CD4-positive, alpha-beta T cell (primary cell): ENCODE measurements at regions of chr22 and their contacts with region 1.

Region 1: DNA sequence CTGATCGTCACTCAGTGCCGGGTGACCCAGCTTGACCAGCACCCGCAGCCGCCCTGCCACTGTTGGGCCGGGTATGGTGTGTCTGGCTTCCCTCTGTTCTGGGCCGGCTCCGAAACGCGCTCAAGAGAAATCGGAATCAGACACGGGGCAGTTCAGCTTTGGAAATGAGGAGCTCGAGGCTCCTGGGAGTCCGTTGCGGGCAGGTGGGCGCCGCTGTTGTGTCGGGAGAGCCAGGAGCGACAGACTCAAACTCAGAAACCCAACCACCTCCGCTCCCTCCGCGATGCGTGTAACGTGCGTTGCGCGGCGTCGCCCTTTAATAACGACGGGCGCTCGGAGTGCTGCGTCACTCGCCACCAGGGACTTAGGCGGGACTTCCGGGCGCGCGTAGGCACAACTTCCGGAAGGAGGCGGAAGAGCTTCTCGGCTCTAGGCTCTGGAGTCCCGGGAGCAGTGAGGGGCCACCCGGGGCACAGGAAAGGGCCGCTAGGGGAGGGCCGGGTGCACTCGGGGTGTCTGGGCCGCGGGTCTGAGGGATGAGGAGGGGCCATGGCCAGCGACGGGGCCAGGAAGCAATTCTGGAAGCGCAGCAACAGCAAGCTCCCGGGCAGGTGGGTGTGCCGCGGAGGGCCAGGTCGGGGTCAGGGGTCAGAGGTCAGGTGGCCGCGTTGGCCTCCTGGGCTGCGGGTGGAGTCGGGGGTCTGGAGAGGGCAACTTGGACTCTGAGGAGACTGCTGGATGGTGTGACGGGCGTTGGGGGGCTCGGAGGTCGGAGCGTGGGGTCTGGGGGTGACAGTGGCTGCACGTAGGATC is at the start of gene TBC1D22A:
- DNase-seq: peak; percentile 91 to 97 (median 93)
- ATAC-seq: peak; percentile 86
- H3K4me3 ChIP-seq: peak within 1 kb of the TSS; percentile 77
- H3K4me3 Mint-ChIP-seq: peak within 1 kb of the TSS; percentile 99
- H3K27ac ChIP-seq: peak within 1 kb of the TSS; percentile 92
- H3K27ac Mint-ChIP-seq: peak within 1 kb of the TSS; percentile 100
- H3K4me1 ChIP-seq: peaks cover 57% of the 10 kb centered on the region
- H3K4me1 Mint-ChIP-seq: peaks cover 64% of the 10 kb centered on the region
- H3K27me3 ChIP-seq: no peaks in the 10 kb centered on the region
- H3K27me3 Mint-ChIP-seq: no peaks in the 10 kb centered on the region
- CTCF ChIP-seq: no peak
- total RNA-seq, gene TBC1D22A: 27.1 to 31.7 TPM

Region 2: DNA sequence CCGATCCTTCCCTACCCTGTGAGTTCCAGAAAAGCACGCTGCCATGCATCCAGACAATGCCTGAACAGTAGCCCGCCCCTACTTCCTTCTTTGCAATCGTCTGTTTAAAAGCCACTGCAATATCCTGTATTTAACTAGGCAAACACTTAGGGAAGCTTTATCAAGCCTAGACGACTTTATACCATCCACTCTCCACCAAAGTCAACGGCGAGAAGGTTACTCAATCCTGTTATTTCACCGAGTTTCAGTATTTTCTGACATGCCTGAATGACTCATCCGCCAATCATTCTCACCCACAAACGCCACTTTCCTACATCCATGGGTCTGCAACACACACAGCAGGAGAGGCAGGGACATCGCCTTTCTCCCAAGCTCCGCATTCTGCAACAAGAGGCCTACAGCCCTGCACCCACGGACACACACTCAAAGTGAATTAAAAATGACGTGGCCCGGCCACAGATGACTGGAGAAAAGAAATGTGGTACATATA is 234.3 kb before region 1 on chr22:
- CTCF ChIA-PET with region 1: no interaction called
- POLR2A ChIA-PET with region 1: no interaction called
- intact Hi-C with region 1: no loop called
- DNase-seq: peak in 2 of 14 experiments; percentile 51 to 62
- ATAC-seq: no peak
- H3K4me3 ChIP-seq: no peak overlapping the region
- H3K4me3 Mint-ChIP-seq: no peak overlapping the region
- H3K27ac ChIP-seq: no peak overlapping the region
- H3K27ac Mint-ChIP-seq: no peak overlapping the region
- H3K4me1 ChIP-seq: no peaks in the 10 kb centered on the region
- H3K4me1 Mint-ChIP-seq: no peaks in the 10 kb centered on the region
- H3K27me3 ChIP-seq: peaks cover 0 to 2% of the 10 kb centered on the region in 2 experiments
- H3K27me3 Mint-ChIP-seq: peaks cover 8% of the 10 kb centered on the region
- CTCF ChIP-seq: no peak

Region 3: GRCh38 chr22:46563381-46564083 is 198.9 kb before region 1 on chr22:
- CTCF ChIA-PET with region 1: interaction called, 10 read pairs
- POLR2A ChIA-PET with region 1: no interaction called
- intact Hi-C with region 1: no loop called
- DNase-seq: peak; percentile 66 to 88 (median 74)
- ATAC-seq: peak; percentile 96
- H3K4me3 ChIP-seq: peak overlapping the region; percentile 30
- H3K4me3 Mint-ChIP-seq: peak overlapping the region; percentile 38
- H3K27ac ChIP-seq: no peak overlapping the region
- H3K27ac Mint-ChIP-seq: no peak overlapping the region
- H3K4me1 ChIP-seq: peaks cover 13% of the 10 kb centered on the region
- H3K4me1 Mint-ChIP-seq: peaks cover 9% of the 10 kb centered on the region
- H3K27me3 ChIP-seq: no peaks in the 10 kb centered on the region
- H3K27me3 Mint-ChIP-seq: no peaks in the 10 kb centered on the region
- CTCF ChIP-seq: peak; percentile 76

Region 4: GRCh38 chr22:46649141-46650077 is 113.0 kb before region 1 on chr22:
- CTCF ChIA-PET with region 1: no interaction called
- POLR2A ChIA-PET with region 1: no interaction called
- intact Hi-C with region 1: no loop called
- DNase-seq: no peak
- ATAC-seq: no peak
- H3K4me3 ChIP-seq: no peak overlapping the region
- H3K4me3 Mint-ChIP-seq: no peak overlapping the region
- H3K27ac ChIP-seq: no peak overlapping the region
- H3K27ac Mint-ChIP-seq: no peak overlapping the region
- H3K4me1 ChIP-seq: peaks cover 15% of the 10 kb centered on the region
- H3K4me1 Mint-ChIP-seq: peaks cover 17% of the 10 kb centered on the region
- H3K27me3 ChIP-seq: no peaks in the 10 kb centered on the region
- H3K27me3 Mint-ChIP-seq: no peaks in the 10 kb centered on the region
- CTCF ChIP-seq: no peak

Region 5: DNA sequence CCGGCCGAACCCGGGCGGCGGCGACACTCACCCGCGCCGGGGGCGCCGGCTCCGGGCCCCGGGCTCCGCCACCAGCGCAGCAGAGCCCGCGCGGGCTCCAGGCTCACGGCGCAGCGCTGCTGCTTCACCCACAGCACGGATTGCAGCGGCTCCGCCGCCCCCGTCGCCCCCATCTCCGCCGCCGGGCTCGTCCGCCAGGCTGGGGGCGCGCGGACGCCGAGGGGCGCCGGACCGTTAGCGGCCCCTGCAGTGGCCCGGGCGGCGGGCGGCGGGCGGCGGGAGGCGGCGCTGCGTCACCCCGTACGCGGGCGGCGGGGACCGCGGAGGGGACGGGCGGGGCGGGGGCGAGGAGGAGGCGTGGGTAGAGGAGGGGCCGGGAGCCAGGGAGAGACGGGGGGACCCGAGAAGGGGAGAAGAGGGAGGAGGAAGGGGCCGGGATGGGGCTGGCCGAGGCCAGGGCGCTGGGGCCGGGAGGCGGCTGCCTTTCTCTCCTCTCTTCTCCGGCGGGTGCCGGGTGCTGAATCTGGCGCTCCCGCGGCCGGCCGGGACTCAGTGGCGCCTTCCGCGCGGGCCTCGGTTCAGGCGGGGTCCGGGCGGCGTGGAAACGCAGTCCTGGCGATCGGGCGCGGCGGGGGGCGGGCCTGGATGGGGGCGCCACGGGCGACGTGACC is 24.3 kb before region 1 on chr22 and contains the start of gene CERK:
- CTCF ChIA-PET with region 1: interaction called, 19 read pairs
- POLR2A ChIA-PET with region 1: interaction called, 78 read pairs
- intact Hi-C with region 1: loop called (anchors 1 kb)
- DNase-seq: peak; percentile 55 to 87 (median 75)
- ATAC-seq: peak; percentile 50
- H3K4me3 ChIP-seq: peak within 1 kb of the TSS; percentile 83
- H3K4me3 Mint-ChIP-seq: peak within 1 kb of the TSS; percentile 100
- H3K27ac ChIP-seq: peak within 1 kb of the TSS; percentile 86 to 89
- H3K27ac Mint-ChIP-seq: peak within 1 kb of the TSS; percentile 99
- H3K4me1 ChIP-seq: peaks cover 56% of the 10 kb centered on the region
- H3K4me1 Mint-ChIP-seq: peaks cover 51% of the 10 kb centered on the region
- H3K27me3 ChIP-seq: no peaks in the 10 kb centered on the region
- H3K27me3 Mint-ChIP-seq: no peaks in the 10 kb centered on the region
- CTCF ChIP-seq: no peak
- total RNA-seq, gene CERK: 84.6 to 88.5 TPM

Region 6: DNA sequence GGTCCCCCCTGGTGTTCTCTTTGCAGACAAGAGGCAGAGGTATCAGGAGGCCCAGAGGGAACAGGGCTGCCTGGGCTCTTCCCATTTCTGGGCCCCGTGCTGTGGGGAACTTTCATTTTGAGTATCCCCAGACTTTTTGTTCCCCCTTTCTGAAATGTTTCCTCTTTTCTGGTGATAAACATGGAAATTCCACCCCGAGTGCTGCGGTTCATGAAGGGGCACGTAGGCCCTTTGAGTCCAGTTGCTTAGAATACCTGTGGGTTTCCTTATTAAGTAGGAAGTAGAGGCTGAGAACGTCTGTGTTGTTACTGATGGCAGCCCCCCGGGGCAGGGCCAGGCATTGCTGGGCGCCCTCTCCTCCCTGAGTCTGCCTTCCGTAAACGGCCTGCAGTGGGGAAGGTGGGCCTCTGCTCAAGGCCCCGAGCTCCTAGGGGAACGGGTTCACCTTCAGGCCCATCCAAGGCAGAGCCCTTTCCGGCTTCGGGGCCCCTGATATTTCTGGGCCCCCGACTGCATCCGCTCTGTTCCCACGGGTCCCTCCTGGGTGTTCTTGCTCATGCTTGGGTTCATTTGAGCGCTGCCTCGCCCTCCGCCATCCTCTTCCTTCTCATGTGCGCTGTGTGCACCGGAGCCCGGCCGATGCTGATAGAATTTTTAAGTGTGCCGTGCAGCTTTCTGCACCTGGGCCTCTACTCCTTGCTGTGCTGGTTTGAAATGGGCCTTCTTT is 12.0 kb after region 1 on chr22:
- CTCF ChIA-PET with region 1: interaction called, 5 read pairs
- POLR2A ChIA-PET with region 1: interaction called, 43 read pairs
- intact Hi-C with region 1: no loop called
- DNase-seq: peak in 6 of 14 experiments; percentile 10 to 68 (median 49)
- ATAC-seq: peak; percentile 30
- H3K4me3 ChIP-seq: peak overlapping the region; percentile 21
- H3K4me3 Mint-ChIP-seq: peak overlapping the region; percentile 85
- H3K27ac ChIP-seq: peak overlapping the region; percentile 56 to 71
- H3K27ac Mint-ChIP-seq: peak overlapping the region; percentile 87
- H3K4me1 ChIP-seq: peaks cover 75% of the 10 kb centered on the region
- H3K4me1 Mint-ChIP-seq: peaks cover 77% of the 10 kb centered on the region
- H3K27me3 ChIP-seq: no peaks in the 10 kb centered on the region
- H3K27me3 Mint-ChIP-seq: no peaks in the 10 kb centered on the region
- CTCF ChIP-seq: no peak

Region 7: GRCh38 chr22:46798366-46799350 is 36.2 kb after region 1 on chr22:
- CTCF ChIA-PET with region 1: interaction called, 130 read pairs
- POLR2A ChIA-PET with region 1: interaction called, 28 read pairs
- intact Hi-C with region 1: loop called (anchors 1 kb)
- DNase-seq: peak; percentile 54 to 85 (median 78)
- ATAC-seq: peak; percentile 85
- H3K4me3 ChIP-seq: no peak overlapping the region
- H3K4me3 Mint-ChIP-seq: peak overlapping the region; percentile 8
- H3K27ac ChIP-seq: no peak overlapping the region
- H3K27ac Mint-ChIP-seq: peak overlapping the region; percentile 84
- H3K4me1 ChIP-seq: peaks cover 14% of the 10 kb centered on the region
- H3K4me1 Mint-ChIP-seq: peaks cover 47% of the 10 kb centered on the region
- H3K27me3 ChIP-seq: no peaks in the 10 kb centered on the region
- H3K27me3 Mint-ChIP-seq: no peaks in the 10 kb centered on the region
- CTCF ChIP-seq: peak; percentile 79